ENCODE measurements at regions of chr2 and their contacts with region 1.

Region 1: GRCh38 chr2:158006961-158007719 is 94.5 kb upstream of the UPP2 start:
- DNase-seq: no peak
- H3K4me3 ChIP-seq: no peak overlapping the region
- H3K27ac ChIP-seq: no peak overlapping the region
- H3K4me1 ChIP-seq: no peaks in the 10 kb centered on the region
- H3K27me3 ChIP-seq: no peaks in the 10 kb centered on the region
- CTCF ChIP-seq: no peak

Region 2: DNA sequence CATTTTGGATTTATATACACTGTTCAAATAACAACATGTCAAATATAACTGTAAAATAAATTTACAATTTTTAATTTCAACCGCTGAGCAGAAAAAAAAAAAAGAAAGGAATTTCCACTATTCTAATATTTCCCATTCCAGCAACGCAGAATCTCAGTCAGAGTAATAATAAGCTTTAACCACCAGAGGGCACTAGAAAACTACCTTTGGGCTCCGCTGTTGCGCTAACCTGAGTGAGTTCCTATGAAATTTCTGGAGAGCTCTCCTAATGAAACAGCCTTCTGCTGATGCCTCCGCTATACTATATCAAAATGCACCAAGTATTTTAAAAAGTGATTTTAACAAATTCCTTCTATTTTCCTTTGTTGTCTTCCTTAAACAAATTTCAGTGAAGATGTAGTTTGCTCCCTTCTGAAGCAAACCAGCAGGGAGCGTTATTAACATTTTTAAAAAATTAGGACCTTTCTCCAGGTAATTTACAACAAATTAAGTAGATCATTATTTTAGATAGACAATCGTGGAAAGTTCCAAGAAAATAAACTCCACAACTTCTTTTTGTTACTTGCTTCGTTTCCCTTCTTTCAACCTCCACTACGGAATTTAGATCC is 704.5 kb before region 1 on chr2:
- CTCF ChIA-PET with region 1: interaction called, 3 read pairs
- POLR2A ChIA-PET with region 1: no interaction called
- intact Hi-C with region 1: loop called (anchors 5 kb)
- DNase-seq: peak; percentile 70
- H3K4me3 ChIP-seq: no peak overlapping the region
- H3K27ac ChIP-seq: no peak overlapping the region
- H3K4me1 ChIP-seq: no peaks in the 10 kb centered on the region
- H3K27me3 ChIP-seq: peaks cover 48% of the 10 kb centered on the region
- CTCF ChIP-seq: peak; percentile 81

Region 3: DNA sequence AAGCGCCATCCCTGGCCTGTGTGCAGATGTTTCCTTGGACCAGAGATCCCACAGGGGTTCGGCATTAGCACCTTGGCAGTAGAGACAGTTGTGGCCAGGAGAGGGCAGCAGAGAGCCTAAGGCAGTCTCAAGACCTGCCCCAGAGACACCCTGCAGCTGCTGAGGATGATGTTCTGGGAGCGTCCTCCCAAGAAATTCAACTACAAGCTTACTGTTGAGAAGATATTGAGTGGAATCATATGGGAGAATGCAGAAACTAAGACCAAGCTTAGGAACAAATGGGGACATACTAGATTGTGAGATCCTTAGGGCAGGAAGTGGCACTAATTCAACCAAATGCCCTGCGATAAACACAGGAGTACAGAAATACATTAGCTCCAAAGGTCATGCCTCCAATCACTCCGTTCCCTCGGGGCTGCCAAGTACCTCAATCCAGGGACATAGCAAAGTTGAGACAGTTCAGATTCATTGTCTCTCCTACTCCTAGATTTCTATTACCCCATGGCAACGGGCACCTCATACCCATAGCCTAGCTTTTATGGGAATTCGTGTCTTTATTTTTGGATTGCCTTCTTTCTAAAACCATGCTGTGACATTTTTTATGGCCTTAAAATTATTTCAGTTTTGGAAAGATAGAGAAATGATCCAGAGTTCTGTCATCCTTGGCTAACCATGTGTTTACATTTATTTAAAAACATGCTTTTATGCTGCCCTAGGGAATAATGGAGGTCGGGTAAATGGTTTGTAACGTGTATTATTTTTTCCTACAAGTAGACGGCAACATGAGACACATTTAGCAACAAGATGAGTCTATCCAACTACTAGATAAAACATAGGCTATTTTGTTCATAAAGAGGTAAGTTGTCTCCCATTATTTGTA is 679.3 kb before region 1 on chr2:
- CTCF ChIA-PET with region 1: no interaction called
- POLR2A ChIA-PET with region 1: no interaction called
- intact Hi-C with region 1: loop called (anchors 5 kb)
- DNase-seq: peak; percentile 76
- H3K4me3 ChIP-seq: no peak overlapping the region
- H3K27ac ChIP-seq: no peak overlapping the region
- H3K4me1 ChIP-seq: no peaks in the 10 kb centered on the region
- H3K27me3 ChIP-seq: peaks cover 28% of the 10 kb centered on the region
- CTCF ChIP-seq: peak; percentile 94

Region 4: GRCh38 chr2:157497638-157498314 is 509.4 kb before region 1 on chr2:
- CTCF ChIA-PET with region 1: no interaction called
- POLR2A ChIA-PET with region 1: no interaction called
- intact Hi-C with region 1: loop called (anchors 2 kb)
- DNase-seq: peak; percentile 61
- H3K4me3 ChIP-seq: no peak overlapping the region
- H3K27ac ChIP-seq: no peak overlapping the region
- H3K4me1 ChIP-seq: no peaks in the 10 kb centered on the region
- H3K27me3 ChIP-seq: no peaks in the 10 kb centered on the region
- CTCF ChIP-seq: peak; percentile 86

Region 5: DNA sequence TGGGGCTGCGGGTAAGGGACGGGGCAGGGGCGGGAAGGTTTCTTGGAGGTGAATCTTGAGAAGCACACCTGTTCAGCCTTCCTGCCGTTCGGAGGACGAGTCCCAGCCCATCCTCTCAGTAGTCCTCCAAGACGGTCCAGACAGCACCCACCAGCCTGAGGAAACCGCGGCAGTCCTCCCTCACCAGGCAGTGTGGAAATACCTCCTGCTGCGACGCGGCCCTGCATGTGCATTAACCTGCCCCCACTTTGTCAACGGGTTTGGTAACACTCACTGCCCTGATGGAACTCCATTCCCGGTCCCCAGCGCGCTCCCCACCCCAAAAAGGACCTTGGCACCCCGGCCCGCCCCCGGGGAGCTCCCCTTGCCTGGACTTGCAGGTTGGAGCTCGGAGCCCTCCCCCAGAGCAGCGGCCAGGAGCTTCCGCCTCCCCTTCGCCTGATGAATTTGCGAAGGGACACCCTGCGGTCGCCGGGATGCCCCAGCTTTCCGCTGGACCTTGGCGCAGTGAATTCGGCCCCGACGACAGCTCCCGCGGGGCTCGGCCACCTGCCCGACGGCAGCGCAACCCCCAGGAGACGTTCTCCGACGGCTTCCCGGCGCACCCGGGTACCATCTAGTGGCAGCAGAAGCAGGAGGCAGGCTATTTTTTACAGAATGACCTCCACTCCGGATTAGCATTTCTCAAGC is 410.0 kb before region 1 on chr2:
- CTCF ChIA-PET with region 1: no interaction called
- POLR2A ChIA-PET with region 1: no interaction called
- intact Hi-C with region 1: loop called (anchors 10 kb)
- DNase-seq: peak; percentile 33
- H3K4me3 ChIP-seq: no peak overlapping the region
- H3K27ac ChIP-seq: no peak overlapping the region
- H3K4me1 ChIP-seq: no peaks in the 10 kb centered on the region
- H3K27me3 ChIP-seq: peaks cover 43% of the 10 kb centered on the region
- CTCF ChIP-seq: peak; percentile 59

Region 6: DNA sequence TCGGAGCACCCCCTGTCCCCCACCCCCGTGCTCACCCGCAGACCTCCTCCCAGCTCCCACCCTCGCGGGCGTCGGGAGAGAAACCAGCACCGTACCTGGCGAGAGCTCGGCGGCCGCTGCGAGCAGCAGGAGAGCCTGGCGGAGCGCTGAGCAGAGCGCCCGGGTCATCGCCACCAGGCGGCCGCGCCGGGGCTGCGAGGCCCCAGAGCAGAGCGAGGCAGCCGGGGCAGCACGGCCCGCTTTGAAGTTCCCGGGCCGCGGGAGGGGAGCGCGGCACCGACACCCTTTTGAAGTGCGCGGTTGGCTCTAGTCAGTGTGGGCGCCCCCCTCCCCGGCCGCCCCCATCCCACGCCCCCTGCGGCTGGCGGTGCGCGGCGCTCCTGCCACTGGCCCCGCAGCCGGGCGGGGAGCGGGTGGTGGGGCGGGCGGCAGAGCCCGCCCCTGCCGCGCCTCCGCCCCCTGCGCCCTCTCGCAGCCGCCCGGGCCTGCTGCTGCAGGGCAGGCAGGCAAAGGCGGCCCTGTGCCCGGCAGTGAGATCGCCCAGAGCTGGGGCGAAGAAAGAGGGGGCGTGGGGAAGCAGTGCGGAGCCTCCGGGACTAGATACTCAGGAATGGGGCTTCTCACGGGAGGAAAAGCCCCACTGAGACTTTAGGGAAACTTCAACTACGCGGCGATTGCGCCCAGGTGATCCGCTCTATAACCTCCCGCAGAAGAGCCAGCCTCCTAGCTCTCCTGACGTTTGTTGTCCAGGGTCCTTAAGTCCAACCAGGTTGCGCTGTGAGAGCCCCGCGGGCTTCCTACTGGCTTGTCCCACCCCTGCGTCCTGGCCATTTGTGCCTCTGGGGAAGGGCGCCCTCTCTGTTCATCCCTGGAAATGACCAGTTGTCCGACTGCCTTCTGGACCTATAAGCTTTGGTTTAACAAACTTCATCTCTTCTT is 378.4 kb before region 1 on chr2 and contains the start of gene ACVR1C:
- CTCF ChIA-PET with region 1: no interaction called
- POLR2A ChIA-PET with region 1: no interaction called
- intact Hi-C with region 1: loop called (anchors 10 kb)
- DNase-seq: peak; percentile 48
- H3K4me3 ChIP-seq: peak within 1 kb of the TSS; percentile 45
- H3K27ac ChIP-seq: no peak within 1 kb of the TSS
- H3K4me1 ChIP-seq: peaks cover 6% of the 10 kb centered on the region
- H3K27me3 ChIP-seq: peaks cover 31% of the 10 kb centered on the region
- CTCF ChIP-seq: peak; percentile 72
- total RNA-seq, gene ACVR1C: 0.13 TPM in 1 of 2 replicates, not detected in the other

Region 7: DNA sequence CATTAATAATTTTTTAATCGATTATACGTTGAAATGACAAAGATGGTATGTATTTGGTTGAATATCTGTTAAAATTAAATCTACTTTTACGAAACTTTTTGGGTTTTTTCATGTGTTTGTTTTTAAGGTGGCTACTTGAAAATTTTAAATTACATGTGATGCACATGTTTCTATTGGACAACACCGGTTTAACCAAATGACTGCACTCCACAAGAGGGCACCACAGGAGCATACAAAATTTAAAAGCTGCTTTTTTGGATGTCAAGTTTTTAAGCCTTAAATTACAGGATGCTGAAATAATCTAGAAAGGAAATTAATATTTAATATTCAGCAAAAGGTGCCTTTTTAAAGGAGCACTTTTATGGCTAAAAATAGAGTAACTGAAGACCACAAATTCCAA is 229.7 kb before region 1 on chr2:
- CTCF ChIA-PET with region 1: no interaction called
- POLR2A ChIA-PET with region 1: no interaction called
- intact Hi-C with region 1: loop called (anchors 1 kb)
- DNase-seq: peak; percentile 70
- H3K4me3 ChIP-seq: no peak overlapping the region
- H3K27ac ChIP-seq: no peak overlapping the region
- H3K4me1 ChIP-seq: peaks cover 27% of the 10 kb centered on the region
- H3K27me3 ChIP-seq: no peaks in the 10 kb centered on the region
- CTCF ChIP-seq: peak; percentile 75

Region 8: GRCh38 chr2:158045362-158045761 is 38.2 kb after region 1 on chr2:
- CTCF ChIA-PET with region 1: no interaction called
- POLR2A ChIA-PET with region 1: no interaction called
- intact Hi-C with region 1: no loop called
- DNase-seq: no peak
- H3K4me3 ChIP-seq: no peak overlapping the region
- H3K27ac ChIP-seq: peak overlapping the region; percentile 85
- H3K4me1 ChIP-seq: peaks cover 88% of the 10 kb centered on the region
- H3K27me3 ChIP-seq: no peaks in the 10 kb centered on the region
- CTCF ChIP-seq: 0 out of 2 replicates have a peak, but pooled peaks have one; percentile 22